ENCODE measurements at regions of chr2 and their contacts with region 1.

Region 1: GRCh38 chr2:193428336-193428818 is 1233.6 kb upstream of the TMEFF2 start:
- DNase-seq: no peak
- H3K4me3 ChIP-seq: no peak overlapping the region
- H3K27ac ChIP-seq: no peak overlapping the region
- H3K4me1 ChIP-seq: no peaks in the 10 kb centered on the region
- H3K27me3 ChIP-seq: no peaks in the 10 kb centered on the region
- CTCF ChIP-seq: no peak
- EP300 ChIP-seq: no peak
- POLR2A ChIP-seq: no peak

Region 2: DNA sequence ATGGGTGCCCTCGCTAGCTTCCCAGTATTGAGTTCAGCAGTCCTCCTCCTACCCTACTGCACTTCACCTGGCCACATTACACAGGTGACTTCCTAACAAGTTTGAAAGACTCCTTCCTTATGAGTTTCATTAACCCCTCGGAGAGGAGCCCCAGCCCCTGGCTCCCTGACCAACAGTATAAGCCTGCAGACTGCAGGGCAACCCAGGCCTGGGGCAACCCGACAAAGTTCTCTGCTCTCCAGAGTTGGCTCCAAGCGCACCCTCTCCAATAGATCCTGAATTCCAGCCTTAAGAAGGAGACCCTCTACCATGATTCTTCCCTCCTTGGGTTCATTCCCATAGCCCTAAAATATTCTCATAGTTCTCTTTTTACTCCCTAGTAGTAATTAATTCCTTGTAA is 70.9 kb before region 1 on chr2:
- in situ Hi-C with region 1: no loop called
- intact Hi-C with region 1: loop called (anchors 2 kb)
- DNase-seq: no peak
- H3K4me3 ChIP-seq: no peak overlapping the region
- H3K27ac ChIP-seq: no peak overlapping the region
- H3K4me1 ChIP-seq: no peaks in the 10 kb centered on the region
- H3K27me3 ChIP-seq: no peaks in the 10 kb centered on the region
- CTCF ChIP-seq: no peak
- EP300 ChIP-seq: no peak
- POLR2A ChIP-seq: no peak

Measured in transverse colon (tissue), 4 donors.